Dorsolateral prefrontal cortex (tissue), 120 donors: ENCODE measurements at regions of chr5 and their contacts with region 1.

Region 1: DNA sequence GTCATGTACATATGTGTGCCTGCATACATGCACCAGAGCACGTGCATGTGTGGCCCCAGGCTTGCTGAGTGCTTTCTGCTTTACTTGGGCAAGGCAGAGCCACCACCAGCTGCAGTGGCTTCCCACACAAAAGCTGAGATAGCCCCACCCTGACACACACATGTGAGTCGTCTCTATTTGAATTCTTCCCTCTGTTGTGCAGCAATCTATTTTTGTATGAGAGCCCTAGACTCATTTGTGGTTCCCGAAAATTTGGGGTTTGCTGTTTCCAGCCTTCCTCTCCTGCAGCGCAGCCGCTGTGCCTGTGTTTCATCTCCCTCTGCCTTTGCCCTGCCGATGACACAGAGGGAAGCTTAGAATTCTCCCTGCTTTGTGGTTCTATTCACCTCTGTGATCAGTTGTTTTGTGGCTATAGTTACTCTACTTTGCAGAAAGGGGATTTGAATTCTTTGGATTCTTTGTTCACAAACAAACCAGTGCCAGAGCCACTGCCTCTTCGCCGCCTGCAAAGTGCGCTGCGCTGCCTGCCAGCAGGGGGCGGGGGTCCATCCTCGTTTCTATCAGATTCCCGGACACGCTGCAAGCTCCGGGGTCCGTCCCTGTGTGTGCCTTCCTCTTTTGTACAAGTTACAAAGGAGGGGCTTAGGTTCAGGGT is 95.8 kb upstream of the DAP start:
- DNase-seq: peak; percentile 23 to 83 (median 72)
- H3K4me3 ChIP-seq: peak overlapping the region in 58 of 59 donors; percentile 12 to 62 (median 42)
- H3K27ac ChIP-seq: peak overlapping the region in 35 of 59 donors; percentile 0 to 79 (median 44)
- H3K27me3 ChIP-seq: no peaks in the 10 kb centered on the region
- CTCF ChIP-seq: peak; percentile 68 to 92 (median 85)

Region 2: DNA sequence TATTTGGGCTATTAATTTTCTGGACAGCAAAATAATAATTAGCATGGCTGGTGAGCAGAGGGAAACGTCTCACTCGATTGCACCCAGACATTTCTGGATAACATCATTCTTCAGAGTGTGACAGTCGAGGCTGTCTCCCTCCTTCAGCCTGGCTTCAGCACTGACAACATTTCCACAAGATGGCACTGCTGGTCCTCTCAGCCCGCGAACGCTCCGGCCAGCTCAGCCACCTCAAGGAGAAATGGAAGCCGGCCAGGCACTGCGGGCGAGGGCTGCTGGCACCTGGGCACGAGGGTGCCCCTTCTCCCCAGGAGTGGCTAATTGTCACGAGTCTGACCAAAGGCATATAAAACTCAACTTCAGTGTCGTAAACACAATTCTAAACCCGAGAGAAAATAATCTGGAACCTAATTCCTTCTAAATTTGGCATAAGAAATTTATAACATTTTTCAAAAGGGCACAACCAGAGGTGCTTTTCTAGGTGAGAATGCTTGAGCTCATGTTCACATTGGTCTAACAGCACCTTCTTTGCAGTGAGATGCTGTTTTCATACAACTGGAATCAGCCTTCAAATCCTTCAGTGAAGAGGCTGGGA is 161.7 kb before region 1 on chr5:
- intact Hi-C with region 1: loop called (anchors 5 kb)
- DNase-seq: peak; percentile 61 to 85 (median 76)
- H3K4me3 ChIP-seq: peak overlapping the region in 42 of 59 donors; percentile 6 to 56 (median 38)
- H3K27ac ChIP-seq: peak overlapping the region in 5 of 59 donors; percentile 7 to 55 (median 25)
- H3K27me3 ChIP-seq: no peaks in the 10 kb centered on the region
- CTCF ChIP-seq: peak; percentile 58 to 91 (median 81)

Region 3: GRCh38 chr5:10914741-10915480 is 58.1 kb after region 1 on chr5:
- intact Hi-C with region 1: loop called in 1 of 2 experiments (anchors 5 kb)
- DNase-seq: no peak
- H3K4me3 ChIP-seq: no peak overlapping the region
- H3K27ac ChIP-seq: no peak overlapping the region
- H3K27me3 ChIP-seq: no peaks in the 10 kb centered on the region
- CTCF ChIP-seq: no peak

Region 4: GRCh38 chr5:11494340-11494739 is 637.5 kb after region 1 on chr5:
- intact Hi-C with region 1: loop called (anchors 10 kb)
- DNase-seq: no peak
- H3K4me3 ChIP-seq: no peak overlapping the region
- H3K27ac ChIP-seq: peak overlapping the region in 5 of 59 donors; percentile 7 to 55 (median 20)
- H3K27me3 ChIP-seq: no peaks in the 10 kb centered on the region
- CTCF ChIP-seq: peak; percentile 46 to 85 (median 65)

Region 5: DNA sequence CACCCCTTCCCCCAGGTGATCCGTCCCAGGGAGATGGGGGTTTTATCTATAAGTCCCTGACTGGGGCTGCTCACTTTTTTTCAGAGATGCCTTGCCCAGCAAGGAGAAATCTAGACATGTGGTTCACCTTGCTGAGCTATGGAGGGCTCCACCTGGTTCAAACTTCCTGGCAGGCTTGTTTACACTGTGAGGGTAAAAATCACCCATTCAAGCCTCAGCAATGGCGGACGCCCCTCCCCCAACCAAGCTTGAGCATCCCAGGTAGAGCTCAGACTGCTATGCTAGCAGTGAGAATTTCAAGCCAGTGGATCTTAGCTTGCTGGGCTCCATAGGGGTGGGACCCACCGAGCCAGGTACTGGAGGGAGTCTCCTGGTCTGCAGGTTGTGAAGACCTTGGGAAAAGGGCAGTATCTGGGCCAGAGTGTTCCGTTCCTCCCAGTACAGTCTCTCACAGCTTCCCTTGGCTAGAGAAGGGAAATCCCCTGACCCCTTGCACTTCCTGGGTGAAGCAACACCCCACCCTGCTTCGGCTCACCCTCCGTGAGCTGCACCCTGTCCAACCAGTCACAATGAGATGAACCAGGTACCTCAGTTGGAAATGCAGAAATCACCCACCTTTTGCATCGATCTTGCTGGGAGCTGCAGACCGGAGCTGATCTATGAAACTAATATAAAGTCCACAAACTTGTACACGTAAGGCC is 815.7 kb after region 1 on chr5:
- intact Hi-C with region 1: no loop called
- DNase-seq: no peak
- H3K4me3 ChIP-seq: no peak overlapping the region
- H3K27ac ChIP-seq: no peak overlapping the region
- H3K27me3 ChIP-seq: no peaks in the 10 kb centered on the region
- CTCF ChIP-seq: no peak

Region 6: DNA sequence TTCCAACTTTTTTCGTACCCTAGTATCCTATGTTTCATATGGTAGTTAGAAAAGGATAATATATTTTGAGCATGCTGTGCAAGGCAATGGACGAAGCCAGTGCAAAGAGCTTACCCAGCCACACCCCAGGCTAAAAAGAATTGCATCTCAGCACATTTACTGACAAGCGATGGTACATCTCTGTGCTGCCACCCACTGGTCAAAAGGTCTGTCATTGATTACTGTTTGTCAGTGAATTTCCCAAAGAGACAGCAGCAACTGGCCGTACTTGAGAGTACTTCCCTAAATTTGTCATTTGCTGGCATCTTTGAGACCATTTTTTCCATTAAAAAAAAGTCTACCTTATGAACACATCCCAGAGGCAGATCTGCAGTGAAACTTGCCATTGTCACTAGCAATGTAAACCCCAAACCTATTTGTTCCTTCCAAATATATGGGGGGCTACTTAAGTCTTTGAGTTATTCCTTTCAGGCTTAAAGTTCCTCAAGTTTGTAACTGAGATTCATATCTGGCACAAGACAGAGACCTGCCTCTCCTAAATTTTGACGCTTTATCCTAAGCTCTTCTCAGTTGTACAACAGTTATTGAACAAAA is 863.2 kb after region 1 on chr5:
- intact Hi-C with region 1: loop called in 1 of 2 experiments (anchors 5 kb)
- DNase-seq: peak in 9 of 10 donors; percentile 34 to 91 (median 59)
- H3K4me3 ChIP-seq: no peak overlapping the region
- H3K27ac ChIP-seq: peak overlapping the region in 1 of 59 donors; percentile 9
- H3K27me3 ChIP-seq: no peaks in the 10 kb centered on the region
- CTCF ChIP-seq: peak; percentile 38 to 81 (median 67)